ENCODE measurements at regions of chr1 and their contacts with region 1.

Region 1: DNA sequence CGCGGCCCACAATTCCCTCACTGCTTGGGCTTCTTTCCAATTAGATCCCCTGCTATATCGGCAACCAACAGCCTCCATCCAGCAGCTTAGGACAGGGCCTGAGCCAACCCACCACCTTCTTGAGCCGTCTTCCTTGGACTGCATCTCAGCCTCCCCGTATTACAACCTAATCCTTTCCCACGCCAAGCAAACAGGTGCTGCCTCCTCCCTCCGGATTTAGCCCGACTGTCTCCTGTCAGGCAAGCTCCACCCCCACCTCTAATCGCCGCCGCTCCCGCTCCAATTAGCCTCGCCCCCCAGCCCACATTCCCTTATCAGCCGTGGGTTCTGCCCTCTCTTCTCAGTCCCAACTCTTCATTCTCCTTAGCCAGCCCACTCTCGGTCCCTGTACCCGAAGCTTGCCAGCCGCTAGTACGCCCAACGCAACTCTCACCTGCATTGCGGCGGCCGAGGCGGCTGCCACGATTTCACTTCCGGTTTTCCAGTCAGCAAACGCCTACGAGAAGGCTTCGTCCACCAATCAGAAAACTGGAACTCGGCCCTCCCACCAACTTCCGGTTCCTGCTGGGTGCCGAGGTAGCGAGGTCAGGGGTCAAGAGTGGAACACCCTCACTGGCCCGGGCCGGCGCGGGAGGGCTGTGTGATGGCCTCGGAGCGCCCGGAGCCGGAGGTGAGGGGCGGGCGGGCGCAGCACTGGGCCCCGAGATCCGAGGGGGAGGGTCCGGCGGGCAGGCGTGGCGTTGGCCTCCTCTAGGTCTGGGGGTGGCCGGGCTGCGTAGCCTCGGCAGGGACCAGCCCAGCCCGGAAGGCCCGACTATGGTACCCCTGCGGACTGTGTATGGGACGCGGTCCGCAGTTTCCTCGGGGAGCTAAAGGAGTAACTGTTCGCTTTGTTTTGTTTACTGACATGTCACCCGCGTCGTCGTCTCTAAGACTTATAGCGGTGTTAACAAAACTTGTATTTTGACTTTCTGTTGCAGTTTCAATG is at the starts of genes MED8 and SZT2:
- DNase-seq: peak; percentile 86 to 96 (median 92)
- ATAC-seq: peak; percentile 91
- H3K4me3 ChIP-seq: peak within 1 kb of the TSS; percentile 81 to 91
- H3K4me3 Mint-ChIP-seq: peak within 1 kb of the TSS; percentile 99
- H3K27ac ChIP-seq: peak within 1 kb of the TSS; percentile 70 to 86
- H3K27ac Mint-ChIP-seq: peak within 1 kb of the TSS; percentile 98
- H3K4me1 ChIP-seq: peaks cover 26% of the 10 kb centered on the region
- H3K4me1 Mint-ChIP-seq: peaks cover 57% of the 10 kb centered on the region
- H3K27me3 ChIP-seq: no peaks in the 10 kb centered on the region
- H3K27me3 Mint-ChIP-seq: no peaks in the 10 kb centered on the region
- CTCF ChIP-seq: no peak
- total RNA-seq, gene MED8: 18.8 to 20.2 TPM
- total RNA-seq, gene SZT2: 57.0 to 64.4 TPM

Region 2: DNA sequence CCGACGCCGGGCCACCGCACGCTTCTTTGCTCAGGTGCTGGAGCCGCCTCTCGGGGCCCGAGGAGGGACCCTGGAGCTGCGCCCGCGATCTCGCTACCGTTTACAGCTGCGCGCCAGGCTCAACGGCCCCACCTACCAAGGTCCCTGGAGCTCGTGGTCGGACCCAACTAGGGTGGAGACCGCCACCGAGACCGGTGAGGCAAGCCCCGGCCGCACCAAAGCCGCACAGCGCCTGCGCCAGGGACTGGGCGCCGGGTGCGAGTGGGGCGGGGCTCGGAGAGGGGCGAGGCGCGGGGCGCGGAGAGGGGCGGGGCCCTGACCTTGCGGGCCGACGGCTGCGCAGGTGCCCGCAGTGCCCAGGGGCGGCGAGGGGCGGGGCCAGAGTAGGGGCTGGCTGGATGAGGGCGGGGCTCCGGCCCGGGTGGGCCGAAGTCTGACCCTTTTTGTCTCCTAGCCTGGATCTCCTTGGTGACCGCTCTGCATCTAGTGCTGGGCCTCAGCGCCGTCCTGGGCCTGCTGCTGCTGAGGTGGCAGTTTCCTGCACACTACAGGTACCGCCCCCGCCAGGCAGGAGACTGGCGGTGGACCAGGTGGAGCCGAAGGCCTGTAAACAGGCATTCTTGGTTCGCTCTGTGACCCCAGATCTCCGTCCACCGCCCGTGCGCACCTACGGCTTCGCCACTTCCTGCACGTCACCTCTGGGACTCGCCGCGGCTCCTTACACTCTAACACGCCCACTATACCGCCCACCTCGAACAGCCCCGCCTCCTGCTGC is 40.6 kb before region 1 on chr1:
- CTCF ChIA-PET with region 1: no interaction called
- POLR2A ChIA-PET with region 1: no interaction called
- intact Hi-C with region 1: loop called in 1 of 2 experiments (anchors 5 kb)
- DNase-seq: peak; percentile 10 to 90 (median 71)
- ATAC-seq: peak; percentile 85
- H3K4me3 ChIP-seq: peak overlapping the region; percentile 43 to 44
- H3K4me3 Mint-ChIP-seq: peak overlapping the region; percentile 76
- H3K27ac ChIP-seq: peak overlapping the region; percentile 69 to 73
- H3K27ac Mint-ChIP-seq: peak overlapping the region; percentile 90
- H3K4me1 ChIP-seq: no peaks in the 10 kb centered on the region
- H3K4me1 Mint-ChIP-seq: peaks cover 13% of the 10 kb centered on the region
- H3K27me3 ChIP-seq: no peaks in the 10 kb centered on the region
- H3K27me3 Mint-ChIP-seq: no peaks in the 10 kb centered on the region
- CTCF ChIP-seq: no peak

Region 3: GRCh38 chr1:43376723-43377235 is 12.8 kb before region 1 on chr1:
- CTCF ChIA-PET with region 1: interaction called, 3 read pairs
- POLR2A ChIA-PET with region 1: interaction called, 14 read pairs
- intact Hi-C with region 1: no loop called
- DNase-seq: no peak
- ATAC-seq: no peak
- H3K4me3 ChIP-seq: no peak overlapping the region
- H3K4me3 Mint-ChIP-seq: no peak overlapping the region
- H3K27ac ChIP-seq: no peak overlapping the region
- H3K27ac Mint-ChIP-seq: no peak overlapping the region
- H3K4me1 ChIP-seq: no peaks in the 10 kb centered on the region
- H3K4me1 Mint-ChIP-seq: peaks cover 11% of the 10 kb centered on the region
- H3K27me3 ChIP-seq: no peaks in the 10 kb centered on the region
- H3K27me3 Mint-ChIP-seq: no peaks in the 10 kb centered on the region
- CTCF ChIP-seq: no peak

Region 4: GRCh38 chr1:43404353-43404752 is 14.7 kb after region 1 on chr1:
- CTCF ChIA-PET with region 1: no interaction called
- POLR2A ChIA-PET with region 1: no interaction called
- intact Hi-C with region 1: no loop called
- DNase-seq: no peak
- ATAC-seq: no peak
- H3K4me3 ChIP-seq: no peak overlapping the region
- H3K4me3 Mint-ChIP-seq: no peak overlapping the region
- H3K27ac ChIP-seq: no peak overlapping the region
- H3K27ac Mint-ChIP-seq: no peak overlapping the region
- H3K4me1 ChIP-seq: no peaks in the 10 kb centered on the region
- H3K4me1 Mint-ChIP-seq: peaks cover 9% of the 10 kb centered on the region
- H3K27me3 ChIP-seq: no peaks in the 10 kb centered on the region
- H3K27me3 Mint-ChIP-seq: no peaks in the 10 kb centered on the region
- CTCF ChIP-seq: no peak

Region 5: GRCh38 chr1:43414634-43415223 is 25.1 kb after region 1 on chr1:
- CTCF ChIA-PET with region 1: interaction called, 10 read pairs
- POLR2A ChIA-PET with region 1: no interaction called
- intact Hi-C with region 1: no loop called
- DNase-seq: peak; percentile 37 to 75 (median 70)
- ATAC-seq: peak; percentile 99
- H3K4me3 ChIP-seq: no peak overlapping the region
- H3K4me3 Mint-ChIP-seq: no peak overlapping the region
- H3K27ac ChIP-seq: no peak overlapping the region
- H3K27ac Mint-ChIP-seq: peak overlapping the region; percentile 6
- H3K4me1 ChIP-seq: no peaks in the 10 kb centered on the region
- H3K4me1 Mint-ChIP-seq: no peaks in the 10 kb centered on the region
- H3K27me3 ChIP-seq: no peaks in the 10 kb centered on the region
- H3K27me3 Mint-ChIP-seq: no peaks in the 10 kb centered on the region
- CTCF ChIP-seq: peak; percentile 60

Region 6: DNA sequence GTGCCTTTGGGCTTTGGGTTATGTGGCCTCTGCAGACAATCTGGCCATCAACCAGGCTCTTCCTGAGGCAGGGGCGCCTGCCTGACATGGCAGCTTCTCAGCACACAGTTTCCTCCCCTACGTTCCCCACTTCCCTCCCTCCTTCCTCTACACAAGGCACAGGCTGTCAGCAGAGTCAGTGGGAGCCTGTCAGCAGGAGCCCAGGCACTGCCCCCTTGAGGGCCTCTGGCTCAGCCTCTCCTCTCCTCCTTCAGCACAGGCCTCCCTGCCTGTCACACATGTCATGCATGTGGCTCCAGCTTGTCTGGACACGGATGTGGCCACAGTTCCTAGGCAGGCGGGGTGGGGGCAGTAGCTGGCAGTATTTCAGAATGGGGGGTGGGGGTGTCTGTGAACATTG is 491.8 kb after region 1 on chr1:
- CTCF ChIA-PET with region 1: no interaction called
- POLR2A ChIA-PET with region 1: no interaction called
- intact Hi-C with region 1: no loop called
- DNase-seq: no peak
- ATAC-seq: no peak
- H3K4me3 ChIP-seq: no peak overlapping the region
- H3K4me3 Mint-ChIP-seq: no peak overlapping the region
- H3K27ac ChIP-seq: no peak overlapping the region
- H3K27ac Mint-ChIP-seq: no peak overlapping the region
- H3K4me1 ChIP-seq: peaks cover 13% of the 10 kb centered on the region
- H3K4me1 Mint-ChIP-seq: no peaks in the 10 kb centered on the region
- H3K27me3 ChIP-seq: no peaks in the 10 kb centered on the region
- H3K27me3 Mint-ChIP-seq: no peaks in the 10 kb centered on the region
- CTCF ChIP-seq: no peak

Measured in CD8-positive, alpha-beta T cell (primary cell).